ENCODE measurements at regions of chr3 and their contacts with region 1.

Region 1: DNA sequence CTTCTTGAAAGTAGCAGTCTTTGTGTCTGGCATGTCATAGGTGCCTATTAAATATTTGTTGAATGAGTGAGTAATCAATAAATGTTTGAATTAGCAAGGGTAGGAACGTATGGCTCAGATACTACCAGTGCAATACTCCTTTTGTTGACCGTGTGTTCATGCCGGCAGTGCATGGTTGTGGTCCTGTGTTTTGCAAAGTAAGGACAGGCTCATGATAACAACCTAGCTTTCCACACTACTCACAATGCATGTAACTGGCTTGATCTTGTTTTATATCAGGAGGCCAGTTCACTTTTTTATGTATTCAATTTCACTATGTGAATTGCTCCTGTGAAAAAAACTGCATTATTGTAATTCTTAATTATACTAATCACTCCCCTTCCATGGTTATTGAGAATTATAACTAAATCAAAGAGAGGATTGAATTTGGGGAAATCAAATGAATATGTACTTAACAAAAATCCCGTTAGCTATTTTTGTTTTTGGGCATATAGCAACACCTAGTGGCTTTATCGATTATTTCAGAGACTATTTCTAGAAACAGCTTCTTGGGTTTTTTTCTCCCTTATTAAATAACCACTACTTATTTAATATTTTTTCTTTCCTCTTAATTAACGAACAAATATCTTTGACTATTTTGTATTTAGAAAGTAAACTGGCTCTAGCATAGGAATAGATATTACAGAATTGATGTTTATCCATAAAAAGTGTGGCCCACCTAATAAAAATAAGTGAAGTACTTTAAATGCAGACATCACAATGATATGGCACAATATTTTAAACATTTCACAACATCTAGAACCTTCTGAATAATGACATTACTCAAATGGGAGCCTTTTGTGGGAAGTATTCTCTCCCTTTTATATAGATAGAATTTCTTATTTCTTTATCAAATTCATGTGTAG is 218.5 kb downstream of the BBX start:
- DNase-seq: no peak
- H3K4me3 ChIP-seq: no peak overlapping the region
- H3K27ac ChIP-seq: no peak overlapping the region
- H3K4me1 ChIP-seq: no peaks in the 10 kb centered on the region
- H3K27me3 ChIP-seq: no peaks in the 10 kb centered on the region
- CTCF ChIP-seq: peak; percentile 3 to 67 (median 53)

Region 2: GRCh38 chr3:107574650-107575049 is 166.6 kb before region 1 on chr3:
- intact Hi-C with region 1: loop called (anchors 5 kb)
- DNase-seq: no peak
- H3K4me3 ChIP-seq: no peak overlapping the region
- H3K27ac ChIP-seq: no peak overlapping the region
- H3K4me1 ChIP-seq: peaks cover 0 to 3% of the 10 kb centered on the region in 2 donors
- H3K27me3 ChIP-seq: no peaks in the 10 kb centered on the region
- CTCF ChIP-seq: peak; percentile 11 to 64 (median 50)

Region 3: DNA sequence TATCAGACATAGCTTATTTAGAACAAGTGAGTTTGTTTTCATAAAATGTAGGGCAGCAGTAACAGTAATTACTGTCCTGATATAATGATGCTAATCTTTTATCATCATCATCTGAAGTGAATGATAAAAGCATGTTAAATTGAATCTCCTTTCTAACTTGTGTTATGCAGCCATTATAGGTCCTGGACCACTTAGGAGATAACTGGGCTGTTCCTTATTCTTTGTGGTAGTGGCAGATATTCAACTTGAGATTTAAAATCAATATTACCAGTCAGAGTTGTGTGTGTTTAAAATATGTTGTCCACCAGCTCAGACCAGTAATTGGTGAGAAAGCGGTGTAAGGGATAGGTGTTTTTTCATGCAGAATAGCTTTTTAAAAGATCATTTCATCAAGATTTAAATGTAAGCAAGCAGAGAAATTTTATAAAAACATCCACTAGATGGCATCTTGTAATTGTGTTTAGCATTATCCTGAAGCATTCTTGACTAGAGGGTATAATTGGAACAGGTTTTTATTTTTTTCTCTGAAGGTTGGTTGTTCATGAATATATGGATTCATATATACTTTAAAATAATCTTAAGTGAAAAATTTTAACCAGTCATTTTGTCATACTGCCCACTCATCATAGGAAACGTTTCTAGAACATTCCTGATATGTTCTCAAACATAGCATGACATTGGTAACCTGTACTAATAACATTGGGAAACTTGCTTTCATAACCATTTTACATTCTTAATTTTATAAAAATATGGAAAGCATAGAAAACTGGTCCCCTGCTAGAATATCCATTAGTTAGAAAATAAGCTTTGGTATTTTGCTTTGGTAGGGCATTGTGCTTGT is 64.6 kb before region 1 on chr3:
- intact Hi-C with region 1: loop called (anchors 1 kb)
- DNase-seq: no peak
- H3K4me3 ChIP-seq: no peak overlapping the region
- H3K27ac ChIP-seq: no peak overlapping the region
- H3K4me1 ChIP-seq: peaks cover 0 to 18% of the 10 kb centered on the region in 2 donors
- H3K27me3 ChIP-seq: no peaks in the 10 kb centered on the region
- CTCF ChIP-seq: peak; percentile 8 to 66 (median 43)

Measured in ascending aorta (tissue), 2 donors.